ENCODE measurements at regions of chr16 and their contacts with region 1.

Region 1: GRCh38 chr16:57244767-57245471 is at the start of gene ARL2BP:
- DNase-seq: peak; percentile 84
- ATAC-seq: peak; percentile 96
- H3K4me3 ChIP-seq: peak within 1 kb of the TSS; percentile 73
- H3K27ac ChIP-seq: peak within 1 kb of the TSS; percentile 75
- H3K4me1 ChIP-seq: peaks cover 21% of the 10 kb centered on the region
- H3K27me3 ChIP-seq: no peaks in the 10 kb centered on the region
- CTCF ChIP-seq: peak in 1 of 3 experiments; percentile 22; a peak in 1 of 6 replicates
- EP300 ChIP-seq: no peak
- POLR2A ChIP-seq: peak; percentile 95
- RAD21 ChIP-seq: no peak
- polyA plus RNA-seq, gene ARL2BP: 12.5 to 20.5 TPM

Region 2: GRCh38 chr16:56807011-56807675 is 437.8 kb before region 1 on chr16:
- CTCF ChIA-PET with region 1: no interaction called
- POLR2A ChIA-PET with region 1: no interaction called
- RAD21 ChIA-PET with region 1: no interaction called
- SMC1A ChIA-PET with region 1: no interaction called
- in situ Hi-C with region 1: no loop called
- intact Hi-C with region 1: no loop called
- DNase-seq: no peak
- ATAC-seq: no peak
- H3K4me3 ChIP-seq: no peak overlapping the region
- H3K27ac ChIP-seq: no peak overlapping the region
- H3K4me1 ChIP-seq: no peaks in the 10 kb centered on the region
- H3K27me3 ChIP-seq: no peaks in the 10 kb centered on the region
- CTCF ChIP-seq: no peak
- EP300 ChIP-seq: no peak
- POLR2A ChIP-seq: no peak
- RAD21 ChIP-seq: no peak

Region 3: DNA sequence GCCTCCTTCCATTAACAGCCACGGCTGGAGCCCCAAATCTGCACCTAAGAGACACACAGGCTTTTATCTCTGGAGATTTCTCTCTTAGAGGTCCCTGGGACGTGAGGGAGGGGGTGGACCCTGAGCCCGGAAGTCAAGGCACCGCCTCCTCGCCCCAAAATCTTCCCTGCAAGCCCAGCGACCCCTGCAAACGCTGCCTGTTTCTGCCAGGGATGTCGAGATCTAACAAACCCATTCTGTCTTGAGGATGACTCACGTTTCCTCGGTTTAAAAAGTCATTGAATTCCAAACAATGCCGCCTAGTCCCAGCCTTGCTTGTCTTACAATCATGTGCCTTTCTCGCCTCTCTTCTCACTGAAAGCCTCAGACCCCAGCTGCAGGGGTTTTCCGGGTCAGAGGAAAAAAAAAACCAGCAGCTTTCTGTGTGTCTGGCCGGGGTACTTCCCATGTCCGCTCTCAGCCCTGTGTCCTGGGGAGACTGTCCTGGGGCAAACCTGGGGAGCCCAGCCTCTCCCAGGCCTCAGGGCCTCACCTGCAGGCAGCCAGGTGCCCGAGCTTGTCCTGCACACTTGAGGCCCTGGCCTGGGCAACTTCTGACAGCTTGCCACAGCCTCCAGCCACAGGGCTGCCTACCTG is 15.5 kb after region 1 on chr16:
- CTCF ChIA-PET with region 1: interaction called, 3 read pairs
- POLR2A ChIA-PET with region 1: interaction called, 35 read pairs
- RAD21 ChIA-PET with region 1: interaction called, 4 read pairs
- SMC1A ChIA-PET with region 1: interaction called, 5 read pairs
- in situ Hi-C with region 1: no loop called
- intact Hi-C with region 1: no loop called
- DNase-seq: peak; percentile 42
- ATAC-seq: peak; percentile 90
- H3K4me3 ChIP-seq: peak overlapping the region; percentile 35; the same call in 1 of the 2 replicates
- H3K27ac ChIP-seq: peak overlapping the region; percentile 16
- H3K4me1 ChIP-seq: peaks cover 3% of the 10 kb centered on the region
- H3K27me3 ChIP-seq: no peaks in the 10 kb centered on the region
- CTCF ChIP-seq: no peak
- EP300 ChIP-seq: no peak
- POLR2A ChIP-seq: no peak
- RAD21 ChIP-seq: no peak

Region 4: GRCh38 chr16:57284208-57284951 is 39.5 kb after region 1 on chr16 and contains the start of gene PLLP:
- CTCF ChIA-PET with region 1: interaction called, 4 read pairs
- POLR2A ChIA-PET with region 1: interaction called, 3 read pairs
- RAD21 ChIA-PET with region 1: interaction called, 9 read pairs
- SMC1A ChIA-PET with region 1: interaction called, 7 read pairs
- in situ Hi-C with region 1: no loop called
- intact Hi-C with region 1: loop called (anchors 2 kb)
- DNase-seq: no peak
- ATAC-seq: peak; percentile 79
- H3K4me3 ChIP-seq: peak within 1 kb of the TSS; percentile 82
- H3K27ac ChIP-seq: no peak within 1 kb of the TSS
- H3K4me1 ChIP-seq: peaks cover 9% of the 10 kb centered on the region
- H3K27me3 ChIP-seq: peaks cover 2 to 8% of the 10 kb centered on the region in 2 experiments; a peak in 2 of 4 replicates
- CTCF ChIP-seq: no peak
- EP300 ChIP-seq: no peak
- POLR2A ChIP-seq: no peak
- RAD21 ChIP-seq: no peak
- polyA plus RNA-seq, gene PLLP: 0.23 to 0.49 TPM

Region 5: GRCh38 chr16:57335366-57335765 is 90.4 kb after region 1 on chr16:
- CTCF ChIA-PET with region 1: no interaction called
- POLR2A ChIA-PET with region 1: no interaction called
- RAD21 ChIA-PET with region 1: no interaction called
- SMC1A ChIA-PET with region 1: no interaction called
- in situ Hi-C with region 1: no loop called
- intact Hi-C with region 1: no loop called
- DNase-seq: no peak
- ATAC-seq: no peak
- H3K4me3 ChIP-seq: no peak overlapping the region
- H3K27ac ChIP-seq: no peak overlapping the region
- H3K4me1 ChIP-seq: peaks cover 11% of the 10 kb centered on the region
- H3K27me3 ChIP-seq: no peaks in the 10 kb centered on the region
- CTCF ChIP-seq: no peak
- EP300 ChIP-seq: no peak
- POLR2A ChIP-seq: no peak
- RAD21 ChIP-seq: no peak

Measured in GM12878 (cell line).